MCF 10A (cell line): ENCODE measurements at regions of chr11 and their contacts with region 1.

Region 1: GRCh38 chr11:111766093-111766833 is at the start of gene PPP2R1B:
- DNase-seq: peak; percentile 84
- H3K4me3 Mint-ChIP-seq: peak within 1 kb of the TSS; percentile 85
- H3K27ac Mint-ChIP-seq: peak within 1 kb of the TSS; percentile 93
- H3K4me1 Mint-ChIP-seq: peaks cover 25% of the 10 kb centered on the region
- H3K27me3 Mint-ChIP-seq: no peaks in the 10 kb centered on the region
- CTCF ChIP-seq: no peak
- total RNA-seq, gene PPP2R1B: 27.3 and 35.7 TPM in 2 replicates

Region 2: GRCh38 chr11:111535281-111535680 is 231.0 kb before region 1 on chr11:
- CTCF ChIA-PET with region 1: no interaction called
- POLR2A ChIA-PET with region 1: no interaction called
- intact Hi-C with region 1: no loop called
- DNase-seq: no peak
- H3K4me3 Mint-ChIP-seq: no peak overlapping the region
- H3K27ac Mint-ChIP-seq: no peak overlapping the region
- H3K4me1 Mint-ChIP-seq: peaks cover 20% of the 10 kb centered on the region
- H3K27me3 Mint-ChIP-seq: no peaks in the 10 kb centered on the region
- CTCF ChIP-seq: no peak

Region 3: GRCh38 chr11:111601979-111602864 is 164.0 kb before region 1 on chr11 and contains the start of gene SIK2:
- CTCF ChIA-PET with region 1: interaction called, 15 read pairs
- POLR2A ChIA-PET with region 1: interaction called, 61 read pairs
- intact Hi-C with region 1: loop called (anchors 2 kb)
- DNase-seq: peak; percentile 92
- H3K4me3 Mint-ChIP-seq: peak within 1 kb of the TSS; percentile 99
- H3K27ac Mint-ChIP-seq: peak within 1 kb of the TSS; percentile 97
- H3K4me1 Mint-ChIP-seq: peaks cover 37% of the 10 kb centered on the region
- H3K27me3 Mint-ChIP-seq: no peaks in the 10 kb centered on the region
- CTCF ChIP-seq: peak; percentile 96
- total RNA-seq, gene SIK2: 13.7 and 18.6 TPM in 2 replicates

Region 4: DNA sequence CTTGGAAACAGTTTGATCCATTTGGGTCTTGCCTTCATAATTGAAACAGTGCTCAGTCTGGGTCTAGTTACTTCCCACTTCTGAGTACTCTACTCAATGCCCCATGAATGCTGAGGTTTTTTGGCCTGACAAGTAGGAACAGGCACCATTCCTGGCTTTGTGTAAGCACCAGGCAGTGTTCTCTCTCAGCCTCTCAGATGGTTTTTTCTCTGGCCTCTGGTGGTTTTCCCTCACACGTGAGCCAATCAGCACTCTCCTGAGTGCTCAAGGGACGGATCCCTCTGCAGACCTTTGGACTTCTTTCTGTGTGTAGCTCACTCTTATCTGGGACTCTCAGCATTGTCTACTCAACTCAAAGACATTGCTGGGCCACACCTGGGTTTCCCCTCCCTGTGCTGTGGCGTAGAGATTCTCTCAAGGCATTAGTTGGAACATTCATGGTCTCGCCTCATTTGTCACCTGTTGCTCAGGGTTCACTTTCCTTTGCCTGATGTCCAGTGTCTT is 142.7 kb before region 1 on chr11:
- CTCF ChIA-PET with region 1: no interaction called
- POLR2A ChIA-PET with region 1: no interaction called
- intact Hi-C with region 1: no loop called
- DNase-seq: no peak
- H3K4me3 Mint-ChIP-seq: no peak overlapping the region
- H3K27ac Mint-ChIP-seq: no peak overlapping the region
- H3K4me1 Mint-ChIP-seq: no peaks in the 10 kb centered on the region
- H3K27me3 Mint-ChIP-seq: no peaks in the 10 kb centered on the region
- CTCF ChIP-seq: no peak

Region 5: GRCh38 chr11:111735262-111736116 is 30.8 kb before region 1 on chr11:
- CTCF ChIA-PET with region 1: interaction called, 4 read pairs
- POLR2A ChIA-PET with region 1: interaction called, 97 read pairs
- intact Hi-C with region 1: loop called (anchors 1 kb)
- DNase-seq: peak; percentile 99
- H3K4me3 Mint-ChIP-seq: peak overlapping the region; percentile 71
- H3K27ac Mint-ChIP-seq: peak overlapping the region; percentile 99
- H3K4me1 Mint-ChIP-seq: peaks cover 27% of the 10 kb centered on the region
- H3K27me3 Mint-ChIP-seq: no peaks in the 10 kb centered on the region
- CTCF ChIP-seq: no peak

Region 6: DNA sequence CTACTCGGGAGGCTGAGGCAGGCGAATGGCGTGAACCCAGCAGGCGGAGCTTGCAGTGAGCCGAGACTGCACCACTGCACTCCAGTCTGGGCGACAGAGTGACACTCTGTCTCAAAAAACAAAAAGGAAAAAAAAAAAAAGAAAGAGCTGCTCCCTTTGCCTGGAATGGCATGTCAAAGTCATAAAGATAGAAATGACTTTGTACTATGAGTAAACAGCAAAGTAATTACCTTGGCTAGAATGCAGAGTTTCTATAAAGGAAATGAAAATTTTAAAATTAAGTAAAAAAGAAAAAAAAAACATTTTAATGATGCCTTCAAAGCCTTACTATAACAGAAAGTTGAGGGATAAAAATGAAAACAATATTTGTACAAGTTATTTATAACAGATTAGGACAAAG is 10.2 kb before region 1 on chr11:
- CTCF ChIA-PET with region 1: interaction called, 7 read pairs
- POLR2A ChIA-PET with region 1: interaction called, 39 read pairs
- intact Hi-C with region 1: no loop called
- DNase-seq: no peak
- H3K4me3 Mint-ChIP-seq: no peak overlapping the region
- H3K27ac Mint-ChIP-seq: no peak overlapping the region
- H3K4me1 Mint-ChIP-seq: peaks cover 5% of the 10 kb centered on the region
- H3K27me3 Mint-ChIP-seq: no peaks in the 10 kb centered on the region
- CTCF ChIP-seq: no peak

Region 7: DNA sequence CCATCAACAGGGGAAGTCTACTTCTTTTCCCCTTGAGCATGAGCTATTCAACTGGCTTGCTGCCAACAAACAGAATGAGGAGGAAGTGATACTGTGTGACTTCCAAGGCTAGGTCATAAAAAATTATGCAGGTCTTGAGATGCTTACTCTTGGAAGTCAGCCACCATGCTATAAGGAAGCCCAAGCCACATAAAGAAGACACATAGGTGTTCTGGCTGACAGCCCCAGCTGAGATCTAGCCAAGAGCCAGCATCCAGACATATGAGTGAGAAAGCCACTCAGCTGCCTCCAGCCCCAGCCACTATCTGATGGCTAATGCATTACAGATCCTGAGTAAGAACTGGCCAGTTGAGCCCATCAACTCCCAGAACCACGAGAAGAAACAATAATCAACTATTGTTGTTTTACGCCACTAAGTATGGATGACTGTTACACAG is 30.9 kb after region 1 on chr11:
- CTCF ChIA-PET with region 1: interaction called, 3 read pairs
- POLR2A ChIA-PET with region 1: interaction called, 12 read pairs
- intact Hi-C with region 1: no loop called
- DNase-seq: peak; percentile 43
- H3K4me3 Mint-ChIP-seq: no peak overlapping the region
- H3K27ac Mint-ChIP-seq: no peak overlapping the region
- H3K4me1 Mint-ChIP-seq: peaks cover 15% of the 10 kb centered on the region
- H3K27me3 Mint-ChIP-seq: no peaks in the 10 kb centered on the region
- CTCF ChIP-seq: no peak